Vagina (tissue), 2 donors: ENCODE measurements at regions of chr4 and their contacts with region 1.

Region 1: GRCh38 chr4:83261307-83261706 is 23.3 kb downstream of the COQ2 start:
- DNase-seq: no peak
- H3K4me3 ChIP-seq: no peak overlapping the region
- H3K27ac ChIP-seq: no peak overlapping the region
- H3K4me1 ChIP-seq: peaks cover 27% of the 10 kb centered on the region
- H3K27me3 ChIP-seq: no peaks in the 10 kb centered on the region
- CTCF ChIP-seq: no peak
- POLR2A ChIP-seq: no peak

Region 2: GRCh38 chr4:82462415-82462831 is 798.9 kb before region 1 on chr4:
- intact Hi-C with region 1: loop called (anchors 5 kb)
- DNase-seq: peak in 1 of 2 donors; percentile 97
- H3K4me3 ChIP-seq: no peak overlapping the region
- H3K27ac ChIP-seq: peak overlapping the region; percentile 31
- H3K4me1 ChIP-seq: no peaks in the 10 kb centered on the region
- H3K27me3 ChIP-seq: no peaks in the 10 kb centered on the region
- CTCF ChIP-seq: peak; percentile 35 to 94 (median 54)
- POLR2A ChIP-seq: no peak

Region 3: DNA sequence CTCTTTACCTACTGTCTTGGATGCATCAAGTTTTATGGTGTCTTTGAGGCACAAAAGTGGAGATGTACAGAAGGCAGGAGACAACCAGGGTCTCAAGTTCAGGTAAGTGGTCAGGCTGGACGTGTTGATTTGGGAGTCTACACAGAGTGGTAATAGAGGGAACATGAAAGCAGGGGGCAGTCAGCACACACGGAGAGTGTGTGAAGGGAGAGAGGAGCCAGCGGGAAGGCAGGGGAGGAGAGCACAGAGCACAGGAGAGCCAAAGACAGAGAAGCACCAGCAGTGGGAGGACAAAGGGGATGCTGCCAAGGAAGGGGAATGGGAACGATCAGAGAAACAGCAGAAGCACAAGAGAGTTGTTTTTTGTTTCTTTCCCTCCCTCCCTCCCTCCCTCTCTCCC is 732.4 kb before region 1 on chr4:
- intact Hi-C with region 1: no loop called
- DNase-seq: no peak
- H3K4me3 ChIP-seq: no peak overlapping the region
- H3K27ac ChIP-seq: no peak overlapping the region
- H3K4me1 ChIP-seq: no peaks in the 10 kb centered on the region
- H3K27me3 ChIP-seq: no peaks in the 10 kb centered on the region
- CTCF ChIP-seq: no peak
- POLR2A ChIP-seq: no peak

Region 4: GRCh38 chr4:83054928-83055327 is 206.4 kb before region 1 on chr4:
- intact Hi-C with region 1: loop called (anchors 5 kb)
- DNase-seq: no peak
- H3K4me3 ChIP-seq: no peak overlapping the region
- H3K27ac ChIP-seq: no peak overlapping the region
- H3K4me1 ChIP-seq: no peaks in the 10 kb centered on the region
- H3K27me3 ChIP-seq: no peaks in the 10 kb centered on the region
- CTCF ChIP-seq: no peak
- POLR2A ChIP-seq: no peak